A673 (cell line): ENCODE measurements at regions of chr15 and their contacts with region 1.

Region 1: GRCh38 chr15:101494251-101494796 is 4.8 kb upstream of the PCSK6 start:
- DNase-seq: no peak
- H3K4me3 ChIP-seq: no peak overlapping the region
- H3K27ac ChIP-seq: no peak overlapping the region
- H3K4me1 ChIP-seq: no peaks in the 10 kb centered on the region
- H3K27me3 ChIP-seq: peaks cover 23% of the 10 kb centered on the region
- CTCF ChIP-seq: no peak

Region 2: DNA sequence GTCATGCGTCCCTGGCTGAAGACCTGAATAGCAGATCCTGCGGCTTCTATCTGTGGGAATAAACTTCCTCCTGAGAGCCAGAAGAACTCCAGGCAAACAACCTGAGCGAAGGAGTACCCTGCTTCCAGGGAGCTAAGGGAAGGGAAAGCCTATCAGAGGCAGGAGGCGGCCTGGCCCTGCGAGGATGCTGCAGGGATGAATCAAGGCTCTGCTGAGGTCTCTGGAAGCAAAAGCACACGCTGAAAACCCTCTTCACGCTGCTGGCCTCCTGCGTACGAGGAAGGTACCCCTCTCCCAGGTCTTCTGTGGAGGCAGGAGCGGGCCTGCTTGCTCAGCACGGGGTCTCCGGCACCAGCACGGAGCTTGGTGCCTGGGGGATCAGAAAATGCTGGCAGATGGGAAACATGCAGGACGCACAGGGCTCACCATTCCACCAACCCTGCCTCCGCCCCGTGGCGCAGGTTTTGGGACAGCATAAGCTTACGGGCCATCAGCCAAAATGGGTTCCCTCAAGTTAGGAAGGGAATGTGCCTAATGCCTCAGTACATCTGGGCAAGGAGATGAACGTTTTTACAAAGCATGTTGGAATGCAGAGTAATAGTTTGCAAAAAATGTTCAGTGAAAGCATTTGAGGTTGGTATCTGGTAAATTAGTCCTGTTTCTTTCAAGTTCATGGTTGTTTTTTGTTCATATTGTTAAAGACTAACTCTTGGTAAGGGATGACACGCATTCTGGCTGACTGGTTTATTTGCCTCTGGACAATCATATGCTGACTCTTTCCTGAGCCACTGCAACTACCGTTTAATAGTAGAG is 314.8 kb before region 1 on chr15:
- CTCF ChIA-PET with region 1: no interaction called
- POLR2A ChIA-PET with region 1: no interaction called
- intact Hi-C with region 1: no loop called
- DNase-seq: no peak
- H3K4me3 ChIP-seq: no peak overlapping the region
- H3K27ac ChIP-seq: peak overlapping the region; percentile 29
- H3K4me1 ChIP-seq: peaks cover 8% of the 10 kb centered on the region
- H3K27me3 ChIP-seq: no peaks in the 10 kb centered on the region
- CTCF ChIP-seq: no peak

Region 3: GRCh38 chr15:101429646-101430045 is 64.7 kb before region 1 on chr15:
- CTCF ChIA-PET with region 1: no interaction called
- POLR2A ChIA-PET with region 1: interaction called, 10 read pairs
- intact Hi-C with region 1: no loop called
- DNase-seq: no peak
- H3K4me3 ChIP-seq: no peak overlapping the region
- H3K27ac ChIP-seq: no peak overlapping the region
- H3K4me1 ChIP-seq: no peaks in the 10 kb centered on the region
- H3K27me3 ChIP-seq: no peaks in the 10 kb centered on the region
- CTCF ChIP-seq: no peak